ENCODE measurements at regions of chr4 and their contacts with region 1.

Region 1: DNA sequence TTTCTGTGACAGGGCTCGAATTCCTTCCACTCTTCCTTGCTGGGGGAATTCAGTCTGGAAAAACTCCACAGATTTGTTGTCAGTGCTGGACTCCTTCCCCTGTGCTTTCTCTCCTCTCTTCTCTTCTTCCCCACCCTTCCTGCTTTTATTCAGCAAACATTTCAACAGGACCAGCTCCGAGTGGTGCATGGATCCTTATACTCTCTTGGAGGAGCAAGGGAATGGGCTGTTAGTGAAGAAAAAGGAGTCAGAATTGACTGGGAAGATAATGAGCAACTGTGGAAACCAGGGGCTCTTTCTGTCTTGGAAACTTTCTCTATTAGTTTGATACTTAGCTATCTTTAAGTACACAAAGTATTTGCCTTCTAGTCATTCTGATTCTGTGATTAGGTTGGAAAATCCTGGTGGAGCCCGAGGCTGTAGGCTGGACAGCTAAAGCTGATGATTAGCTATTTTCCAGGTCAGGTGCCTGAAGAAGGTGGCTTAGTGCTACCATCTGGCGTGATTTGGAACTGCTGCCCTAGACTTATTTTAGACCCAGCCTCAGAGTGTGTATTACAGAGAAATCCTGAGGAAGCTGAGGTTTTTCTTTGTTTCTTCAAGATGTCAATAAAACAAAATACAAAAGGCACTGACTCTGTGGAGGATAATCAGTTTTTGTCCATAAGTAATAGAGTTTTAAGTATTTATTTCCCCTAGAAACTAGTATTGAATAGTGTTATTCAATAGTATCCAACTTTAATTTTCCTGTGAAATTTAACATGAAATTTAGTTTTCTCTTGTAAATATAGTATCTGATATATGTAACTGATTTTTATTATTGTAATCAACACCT is 38.4 kb downstream of the NAP1L5 start:
- DNase-seq: peak in 1 of 2 donors; percentile 49
- ATAC-seq: peak; percentile 87
- H3K4me3 ChIP-seq: no peak overlapping the region
- H3K27ac ChIP-seq: peak overlapping the region in 1 of 2 donors; percentile 68
- H3K4me1 ChIP-seq: peaks cover 0 to 3% of the 10 kb centered on the region in 2 donors
- H3K27me3 ChIP-seq: no peaks in the 10 kb centered on the region

Region 2: DNA sequence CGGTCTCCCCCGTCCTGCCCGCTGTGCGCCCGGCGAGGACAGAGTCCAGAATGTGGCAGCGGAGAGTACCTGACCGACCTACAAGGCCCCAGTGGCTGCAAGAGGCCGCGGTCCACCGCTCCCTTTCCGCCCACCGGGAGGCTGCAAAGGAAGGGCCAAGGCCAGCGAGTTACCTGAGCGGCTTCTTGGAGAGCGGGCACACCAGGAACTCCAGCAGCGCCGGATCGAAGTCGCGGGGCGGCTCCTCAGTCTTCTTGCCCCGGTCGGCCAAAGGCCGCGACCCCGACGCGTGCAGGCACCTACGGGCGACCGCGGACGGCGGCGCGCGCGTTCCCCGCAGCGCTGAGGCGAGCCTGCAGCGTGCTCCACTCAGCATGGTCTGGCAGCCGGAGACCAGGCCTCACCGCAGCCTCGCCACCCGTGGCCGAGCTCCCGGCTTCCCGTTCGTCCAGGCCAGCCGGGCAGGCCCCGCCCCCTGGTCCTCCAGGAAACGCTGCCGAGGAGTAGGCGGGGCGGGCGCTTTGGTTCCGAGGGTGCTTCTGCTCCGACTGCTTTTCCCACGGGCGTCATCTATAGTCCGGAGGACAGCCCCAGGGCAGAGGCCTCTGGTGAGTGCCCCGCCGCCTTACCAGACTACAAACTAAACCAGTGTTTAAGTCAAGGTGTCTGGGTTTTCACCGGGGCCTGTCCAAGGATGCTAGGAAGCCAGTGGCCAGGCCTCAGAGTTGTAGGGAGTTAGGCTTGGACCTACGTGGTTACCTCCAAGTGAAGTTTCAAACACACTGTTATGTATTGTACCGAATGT is 135.7 kb before region 1 on chr4 and contains the start of gene PYURF:
- intact Hi-C with region 1: loop called (anchors 5 kb)
- DNase-seq: peak; percentile 98
- ATAC-seq: peak; percentile 98
- H3K4me3 ChIP-seq: peak within 1 kb of the TSS; percentile 74 to 84
- H3K27ac ChIP-seq: peak within 1 kb of the TSS; percentile 65 to 89
- H3K4me1 ChIP-seq: no peaks in the 10 kb centered on the region
- H3K27me3 ChIP-seq: no peaks in the 10 kb centered on the region
- total RNA-seq, gene PYURF: 51.9 TPM

Region 3: DNA sequence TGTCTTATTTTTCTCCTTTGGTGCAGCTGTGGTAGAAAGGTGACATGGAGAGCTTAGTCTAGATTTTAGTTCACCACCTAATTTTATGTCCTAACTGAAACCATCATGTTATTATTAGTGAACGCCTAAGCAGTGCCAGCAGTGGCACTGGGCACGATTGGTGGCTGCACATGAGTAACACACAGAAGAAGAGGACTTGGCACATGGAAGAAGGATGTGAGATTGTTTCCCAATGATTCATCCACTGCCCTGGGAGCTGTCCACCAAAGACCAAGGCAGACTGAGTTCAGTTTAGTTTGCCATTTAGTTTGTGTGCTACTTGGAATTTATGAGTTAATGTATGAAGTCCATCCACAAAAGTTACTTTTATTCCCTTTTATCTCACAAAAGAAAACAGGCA is 106.5 kb after region 1 on chr4:
- intact Hi-C with region 1: no loop called
- DNase-seq: peak; percentile 59 to 84
- ATAC-seq: peak; percentile 70
- H3K4me3 ChIP-seq: no peak overlapping the region
- H3K27ac ChIP-seq: no peak overlapping the region
- H3K4me1 ChIP-seq: peaks cover 0 to 7% of the 10 kb centered on the region in 2 donors
- H3K27me3 ChIP-seq: no peaks in the 10 kb centered on the region

Region 4: DNA sequence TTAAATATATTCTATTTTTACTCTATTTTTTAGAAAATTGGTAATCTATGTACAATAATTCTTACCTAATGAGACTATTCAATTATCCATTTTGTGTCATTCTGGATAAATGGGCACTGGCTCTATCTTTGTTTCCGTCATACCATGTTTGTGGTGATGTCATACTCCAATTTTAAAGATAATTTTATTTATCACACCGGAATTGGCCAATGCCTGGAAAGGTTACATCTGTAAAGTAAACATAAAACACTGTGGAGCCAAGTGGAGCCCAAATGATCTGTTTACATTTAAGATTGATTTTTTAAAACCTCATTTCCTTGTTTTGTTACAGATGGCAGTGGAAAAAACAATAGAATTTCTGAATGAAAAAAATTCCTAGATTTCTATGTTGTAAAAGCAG is 768.5 kb after region 1 on chr4:
- intact Hi-C with region 1: no loop called
- DNase-seq: no peak
- ATAC-seq: no peak
- H3K4me3 ChIP-seq: no peak overlapping the region
- H3K27ac ChIP-seq: no peak overlapping the region
- H3K4me1 ChIP-seq: no peaks in the 10 kb centered on the region
- H3K27me3 ChIP-seq: no peaks in the 10 kb centered on the region

Measured in aorta (tissue), 5 donors.